ENCODE measurements at regions of chr9 and their contacts with region 1.

Region 1: DNA sequence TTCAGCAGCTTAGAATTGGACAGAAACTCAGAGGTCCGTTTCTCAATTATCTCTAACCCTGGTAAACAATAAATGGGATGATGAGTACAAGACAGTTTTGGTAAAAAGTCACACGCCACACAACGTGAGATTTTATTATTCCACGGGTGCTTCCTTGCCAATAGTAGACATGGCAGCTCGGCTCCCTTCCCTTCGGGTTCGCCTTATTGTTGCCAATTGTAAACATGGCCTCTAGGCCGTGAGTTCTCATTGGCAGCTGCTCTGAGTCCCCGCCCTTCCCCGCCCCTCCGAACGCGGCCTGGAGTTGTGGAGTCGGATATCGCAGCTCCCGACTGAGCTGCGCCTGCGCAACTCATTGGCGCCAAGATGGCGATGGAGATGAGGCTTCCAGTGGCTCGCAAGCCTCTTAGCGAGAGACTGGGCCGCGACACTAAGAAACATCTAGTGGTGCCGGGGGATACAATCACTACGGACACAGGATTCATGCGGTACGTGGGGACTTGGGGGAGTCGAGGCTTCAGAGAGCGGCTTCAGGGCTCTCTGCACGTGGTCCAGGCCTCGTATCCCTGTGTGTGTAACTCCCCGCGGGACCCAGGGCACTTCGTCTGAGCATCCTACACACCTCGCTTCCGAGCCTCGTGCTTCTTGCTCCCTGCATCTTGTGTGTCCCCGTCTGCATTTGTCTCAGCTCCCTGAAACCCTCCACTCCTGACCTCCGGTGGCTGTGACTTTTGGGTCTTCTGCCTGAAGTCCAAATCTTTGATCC is at the start of gene EXOSC2:
- DNase-seq: peak; percentile 96 to 99 (median 98)
- ATAC-seq: peak; percentile 93 to 97 (median 94)
- H3K4me3 ChIP-seq: peak within 1 kb of the TSS; percentile 51 to 91 (median 74)
- H3K27ac ChIP-seq: peak within 1 kb of the TSS in 1 of 4 donors; percentile 22
- H3K4me1 ChIP-seq: peaks cover 10 to 11% (median 10%) of the 10 kb centered on the region in 3 donors
- H3K27me3 ChIP-seq: no peaks in the 10 kb centered on the region
- CTCF ChIP-seq: no peak
- total RNA-seq, gene EXOSC2: 9.1 to 15.5 (median 11.6) TPM

Region 2: GRCh38 chr9:131046581-131047202 is 353.1 kb after region 1 on chr9:
- intact Hi-C with region 1: loop called in 1 of 3 experiments (anchors 10 kb)
- DNase-seq: peak in 5 of 6 donors; percentile 19 to 88 (median 61)
- ATAC-seq: peak; percentile 88 to 98 (median 96)
- H3K4me3 ChIP-seq: no peak overlapping the region
- H3K27ac ChIP-seq: no peak overlapping the region
- H3K4me1 ChIP-seq: no peaks in the 10 kb centered on the region
- H3K27me3 ChIP-seq: no peaks in the 10 kb centered on the region
- CTCF ChIP-seq: peak; percentile 77 to 88 (median 85)